ENCODE measurements at regions of chr12 and their contacts with region 1.

Region 1: GRCh38 chr12:39692258-39692853 is 72.8 kb upstream of the ABCD2 start:
- DNase-seq: no peak
- ATAC-seq: no peak
- H3K4me3 ChIP-seq: no peak overlapping the region
- H3K27ac ChIP-seq: no peak overlapping the region
- H3K4me1 ChIP-seq: no peaks in the 10 kb centered on the region
- H3K27me3 ChIP-seq: no peaks in the 10 kb centered on the region
- CTCF ChIP-seq: peak in 8 of 9 donors; percentile 12 to 62 (median 41)

Region 2: GRCh38 chr12:39329018-39329417 is 363.3 kb before region 1 on chr12:
- intact Hi-C with region 1: loop called in 2 of 10 experiments (anchors 10 kb)
- DNase-seq: no peak
- ATAC-seq: no peak
- H3K4me3 ChIP-seq: no peak overlapping the region
- H3K27ac ChIP-seq: no peak overlapping the region
- H3K4me1 ChIP-seq: peaks cover 0 to 15% (median 5%) of the 10 kb centered on the region in 9 donors
- H3K27me3 ChIP-seq: no peaks in the 10 kb centered on the region
- CTCF ChIP-seq: no peak

Region 3: GRCh38 chr12:39587225-39587624 is 105.1 kb before region 1 on chr12:
- intact Hi-C with region 1: loop called in 5 of 10 experiments (anchors 5 to 10 kb)
- DNase-seq: peak in 1 of 2 donors; percentile 13
- ATAC-seq: peak in 5 of 8 donors; percentile 67 to 76 (median 72)
- H3K4me3 ChIP-seq: no peak overlapping the region
- H3K27ac ChIP-seq: no peak overlapping the region
- H3K4me1 ChIP-seq: peaks cover 0 to 8% (median 0%) of the 10 kb centered on the region in 9 donors
- H3K27me3 ChIP-seq: no peaks in the 10 kb centered on the region
- CTCF ChIP-seq: peak in 7 of 9 donors; percentile 34 to 66 (median 45)

Region 4: DNA sequence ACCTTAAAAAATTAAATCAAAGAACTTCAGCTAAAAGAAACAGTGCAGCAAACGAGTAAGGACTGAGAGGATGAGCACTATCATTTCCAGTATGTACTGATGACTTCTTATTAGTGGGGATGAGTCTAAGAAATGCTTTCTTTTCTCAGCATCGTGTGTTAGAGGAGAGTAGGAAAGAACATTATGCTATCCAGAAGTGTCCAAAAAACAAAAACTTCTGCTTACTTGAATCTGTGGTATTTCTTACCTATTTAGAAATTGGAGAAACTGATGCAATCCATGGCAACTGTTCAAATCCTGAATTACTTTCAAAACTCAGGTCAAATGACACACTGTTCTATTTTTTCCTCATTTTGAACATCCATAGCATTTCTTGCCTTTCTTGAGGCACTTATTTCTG is 96.4 kb before region 1 on chr12:
- intact Hi-C with region 1: loop called in 3 of 10 experiments (anchors 5 to 10 kb)
- DNase-seq: no peak
- ATAC-seq: no peak
- H3K4me3 ChIP-seq: no peak overlapping the region
- H3K27ac ChIP-seq: no peak overlapping the region
- H3K4me1 ChIP-seq: no peaks in the 10 kb centered on the region
- H3K27me3 ChIP-seq: no peaks in the 10 kb centered on the region
- CTCF ChIP-seq: no peak

Measured in heart right ventricle (tissue), 16 donors.